ENCODE measurements at regions of chr1 and their contacts with region 1.

Region 1: GRCh38 chr1:116075577-116076380 is 35.4 kb upstream of the MAB21L3 start:
- DNase-seq: no peak
- H3K4me3 ChIP-seq: no peak overlapping the region
- H3K27ac ChIP-seq: no peak overlapping the region
- H3K4me1 ChIP-seq: no peaks in the 10 kb centered on the region
- H3K27me3 ChIP-seq: no peaks in the 10 kb centered on the region
- CTCF ChIP-seq: no peak

Region 2: GRCh38 chr1:115890580-115890979 is 185.2 kb before region 1 on chr1:
- CTCF ChIA-PET with region 1: no interaction called
- POLR2A ChIA-PET with region 1: no interaction called
- intact Hi-C with region 1: no loop called
- DNase-seq: no peak
- H3K4me3 ChIP-seq: no peak overlapping the region
- H3K27ac ChIP-seq: no peak overlapping the region
- H3K4me1 ChIP-seq: no peaks in the 10 kb centered on the region
- H3K27me3 ChIP-seq: no peaks in the 10 kb centered on the region
- CTCF ChIP-seq: no peak

Region 3: DNA sequence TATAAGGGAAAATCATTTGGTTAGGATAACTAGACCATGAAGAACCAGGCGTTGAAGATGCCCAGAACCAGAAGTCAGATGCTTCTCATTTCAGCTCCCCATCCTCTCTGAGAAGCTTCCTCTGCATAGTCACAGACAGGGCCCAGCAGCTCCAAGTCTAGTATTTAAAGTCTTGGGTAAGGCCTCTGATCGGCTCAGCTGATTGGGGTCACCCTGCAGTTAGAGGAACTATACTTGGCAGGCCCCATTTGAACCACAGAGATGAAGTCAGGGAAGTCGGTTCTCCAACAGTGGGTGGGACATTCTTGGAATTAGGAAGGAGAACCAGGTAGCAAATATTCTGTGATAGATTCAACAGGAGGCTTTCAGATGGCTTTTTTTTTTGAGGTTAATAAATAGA is 51.2 kb before region 1 on chr1:
- CTCF ChIA-PET with region 1: no interaction called
- POLR2A ChIA-PET with region 1: no interaction called
- intact Hi-C with region 1: loop called (anchors 2 kb)
- DNase-seq: no peak
- H3K4me3 ChIP-seq: no peak overlapping the region
- H3K27ac ChIP-seq: no peak overlapping the region
- H3K4me1 ChIP-seq: no peaks in the 10 kb centered on the region
- H3K27me3 ChIP-seq: no peaks in the 10 kb centered on the region
- CTCF ChIP-seq: no peak

Measured in PC-9 (cell line).